ENCODE measurements at regions of chr9 and their contacts with region 1.

Region 1: GRCh38 chr9:86639899-86640379 is 285.7 kb upstream of the TUT7 start:
- DNase-seq: no peak
- H3K4me3 ChIP-seq: no peak overlapping the region
- H3K27ac ChIP-seq: peak overlapping the region; percentile 70
- H3K4me1 ChIP-seq: peaks cover 67% of the 10 kb centered on the region
- H3K27me3 ChIP-seq: no peaks in the 10 kb centered on the region
- CTCF ChIP-seq: peak; percentile 26; the same call in 1 of the 2 replicates

Region 2: DNA sequence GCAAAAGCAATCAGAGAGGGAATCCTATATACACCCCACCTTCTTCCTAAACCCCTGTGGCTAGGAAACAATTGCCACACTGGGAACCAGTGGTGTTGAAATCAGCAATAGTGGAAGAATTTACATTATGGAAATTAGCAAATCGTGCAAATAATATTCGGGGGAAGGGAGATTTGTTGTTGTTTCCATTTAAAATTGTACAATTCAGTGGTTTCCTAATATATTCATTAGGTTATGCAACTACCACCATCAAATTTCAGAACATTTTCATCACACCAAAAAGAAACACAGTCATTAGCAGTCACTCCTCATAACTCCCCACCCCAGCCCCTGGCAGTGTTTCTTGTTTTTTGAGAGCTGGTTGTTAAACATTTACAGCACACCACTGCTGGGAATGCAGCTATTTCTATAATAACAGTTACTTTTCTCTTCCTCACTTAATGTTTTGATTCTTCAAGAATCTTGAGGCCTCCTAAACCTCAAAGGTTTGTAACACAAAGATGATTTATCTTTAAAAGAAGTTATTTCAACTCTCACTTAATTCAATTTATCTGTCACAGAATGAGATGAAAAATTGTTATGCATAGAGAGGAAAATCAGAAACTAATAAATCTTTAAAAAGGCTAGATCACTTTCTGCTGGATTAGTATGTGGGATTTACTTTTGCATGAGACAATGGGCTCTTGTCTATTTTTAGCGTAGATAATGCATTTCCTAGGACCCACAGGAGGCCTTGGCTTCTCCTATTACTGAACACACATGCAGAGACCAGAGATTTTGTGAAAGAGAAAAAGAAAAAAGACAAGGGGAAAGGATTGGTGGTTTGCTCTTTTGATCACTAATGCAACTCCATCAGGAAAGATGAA is 766.0 kb after region 1 on chr9:
- CTCF ChIA-PET with region 1: no interaction called
- POLR2A ChIA-PET with region 1: no interaction called
- intact Hi-C with region 1: loop called (anchors 10 kb)
- DNase-seq: peak; percentile 90
- H3K4me3 ChIP-seq: no peak overlapping the region
- H3K27ac ChIP-seq: peak overlapping the region; percentile 93
- H3K4me1 ChIP-seq: peaks cover 52% of the 10 kb centered on the region
- H3K27me3 ChIP-seq: no peaks in the 10 kb centered on the region
- CTCF ChIP-seq: no peak

Measured in A673 (cell line).